ENCODE measurements at regions of chr5 and their contacts with region 1.

Region 1: GRCh38 chr5:171913987-171914273 is 92.5 kb downstream of the FBXW11 start:
- DNase-seq: no peak
- ATAC-seq: no peak; the same call in 2 of the 3 replicates
- H3K4me3 ChIP-seq: no peak overlapping the region
- H3K27ac ChIP-seq: peak overlapping the region; percentile 49
- H3K4me1 ChIP-seq: peaks cover 25% of the 10 kb centered on the region
- H3K27me3 ChIP-seq: no peaks in the 10 kb centered on the region
- CTCF ChIP-seq: no peak
- EP300 ChIP-seq: no peak
- POLR2A ChIP-seq: no peak
- RAD21 ChIP-seq: no peak

Region 2: DNA sequence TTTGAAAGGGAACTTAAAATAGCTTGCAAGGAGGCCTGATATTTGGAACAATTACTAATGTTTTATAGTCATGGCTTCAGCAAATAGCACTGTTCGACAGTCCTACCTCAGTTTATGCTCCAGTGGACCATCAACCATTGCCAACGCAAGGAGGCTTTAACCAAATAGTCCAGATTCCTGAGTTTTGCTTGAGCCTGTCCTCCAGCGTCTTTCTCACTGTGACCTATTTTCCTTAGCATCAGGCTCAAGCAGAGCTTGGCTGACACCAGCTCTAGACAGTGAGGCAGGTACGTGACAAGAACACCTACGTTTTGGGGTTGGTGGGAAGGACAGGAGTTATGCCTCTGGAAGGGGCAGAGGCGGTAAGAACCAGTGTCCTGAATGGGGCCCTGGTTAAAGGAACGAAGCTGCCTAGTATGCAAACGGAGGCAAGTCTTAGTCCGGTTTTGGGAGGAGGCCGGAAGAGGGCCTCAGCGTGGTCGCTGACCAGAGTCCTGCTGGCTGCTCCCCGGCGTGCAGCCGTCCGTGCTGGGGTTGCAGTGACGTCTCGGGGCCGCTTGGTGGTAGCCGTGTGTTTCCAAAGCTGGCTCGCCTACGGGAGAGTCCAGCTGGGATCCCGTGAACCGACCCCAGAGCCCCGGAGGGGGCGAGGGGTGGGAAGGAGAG is 495.5 kb before region 1 on chr5:
- CTCF ChIA-PET with region 1: interaction called, 10 read pairs
- POLR2A ChIA-PET with region 1: no interaction called
- RAD21 ChIA-PET with region 1: interaction called, 17 read pairs
- SMC1A ChIA-PET with region 1: interaction called, 11 read pairs
- in situ Hi-C with region 1: loop called (anchors 5 kb)
- intact Hi-C with region 1: no loop called
- DNase-seq: no peak
- ATAC-seq: peak; percentile 88
- H3K4me3 ChIP-seq: peak overlapping the region; percentile 55; the same call in 1 of the 2 replicates
- H3K27ac ChIP-seq: no peak overlapping the region
- H3K4me1 ChIP-seq: peaks cover 7% of the 10 kb centered on the region
- H3K27me3 ChIP-seq: peaks cover 4 to 5% of the 10 kb centered on the region in 2 experiments; a peak in 3 of 4 replicates
- CTCF ChIP-seq: peak; percentile 87 to 98 (median 89)
- EP300 ChIP-seq: no peak
- POLR2A ChIP-seq: no peak
- RAD21 ChIP-seq: peak; percentile 80

Region 3: GRCh38 chr5:171736976-171737891 is 176.7 kb before region 1 on chr5:
- CTCF ChIA-PET with region 1: no interaction called
- POLR2A ChIA-PET with region 1: no interaction called
- RAD21 ChIA-PET with region 1: no interaction called
- SMC1A ChIA-PET with region 1: no interaction called
- in situ Hi-C with region 1: no loop called
- intact Hi-C with region 1: no loop called
- DNase-seq: no peak
- ATAC-seq: no peak
- H3K4me3 ChIP-seq: no peak overlapping the region
- H3K27ac ChIP-seq: no peak overlapping the region
- H3K4me1 ChIP-seq: peaks cover 4% of the 10 kb centered on the region; the same call in 1 of the 2 replicates
- H3K27me3 ChIP-seq: no peaks in the 10 kb centered on the region; a peak in 2 of 4 replicates
- CTCF ChIP-seq: no peak
- EP300 ChIP-seq: no peak
- POLR2A ChIP-seq: no peak
- RAD21 ChIP-seq: no peak

Region 4: GRCh38 chr5:171840066-171840465 is 73.9 kb before region 1 on chr5:
- CTCF ChIA-PET with region 1: no interaction called
- POLR2A ChIA-PET with region 1: no interaction called
- RAD21 ChIA-PET with region 1: no interaction called
- SMC1A ChIA-PET with region 1: no interaction called
- in situ Hi-C with region 1: no loop called
- intact Hi-C with region 1: no loop called
- DNase-seq: no peak
- ATAC-seq: peak; percentile 44; the same call in 2 of the 3 replicates
- H3K4me3 ChIP-seq: no peak overlapping the region
- H3K27ac ChIP-seq: no peak overlapping the region
- H3K4me1 ChIP-seq: no peaks in the 10 kb centered on the region
- H3K27me3 ChIP-seq: no peaks in the 10 kb centered on the region
- CTCF ChIP-seq: no peak
- EP300 ChIP-seq: no peak
- POLR2A ChIP-seq: no peak
- RAD21 ChIP-seq: no peak

Region 5: DNA sequence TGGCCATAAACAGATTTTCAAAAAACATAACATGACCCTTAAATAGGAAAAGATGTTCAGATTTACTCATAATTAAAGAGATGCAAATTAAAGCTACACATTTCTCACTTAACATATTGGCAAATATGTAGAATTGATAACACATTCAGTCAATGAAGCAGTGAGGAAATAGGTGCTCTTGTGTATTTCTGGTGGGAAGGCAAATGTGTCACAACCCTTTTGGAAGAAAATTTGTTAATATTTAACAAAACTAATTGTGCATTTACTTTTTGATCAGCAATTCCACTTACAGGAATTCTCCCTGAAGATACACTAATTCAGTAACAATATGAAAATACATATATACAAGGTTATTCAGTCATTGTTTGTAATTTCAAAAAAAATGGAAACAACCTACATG is 24.4 kb after region 1 on chr5:
- CTCF ChIA-PET with region 1: interaction called, 16 read pairs
- POLR2A ChIA-PET with region 1: no interaction called
- RAD21 ChIA-PET with region 1: interaction called, 3 read pairs
- SMC1A ChIA-PET with region 1: interaction called, 12 read pairs
- in situ Hi-C with region 1: no loop called
- intact Hi-C with region 1: no loop called
- DNase-seq: no peak
- ATAC-seq: no peak
- H3K4me3 ChIP-seq: no peak overlapping the region
- H3K27ac ChIP-seq: no peak overlapping the region
- H3K4me1 ChIP-seq: peaks cover 6% of the 10 kb centered on the region; the same call in 1 of the 2 replicates
- H3K27me3 ChIP-seq: no peaks in the 10 kb centered on the region
- CTCF ChIP-seq: no peak
- EP300 ChIP-seq: no peak
- POLR2A ChIP-seq: no peak
- RAD21 ChIP-seq: no peak

Region 6: DNA sequence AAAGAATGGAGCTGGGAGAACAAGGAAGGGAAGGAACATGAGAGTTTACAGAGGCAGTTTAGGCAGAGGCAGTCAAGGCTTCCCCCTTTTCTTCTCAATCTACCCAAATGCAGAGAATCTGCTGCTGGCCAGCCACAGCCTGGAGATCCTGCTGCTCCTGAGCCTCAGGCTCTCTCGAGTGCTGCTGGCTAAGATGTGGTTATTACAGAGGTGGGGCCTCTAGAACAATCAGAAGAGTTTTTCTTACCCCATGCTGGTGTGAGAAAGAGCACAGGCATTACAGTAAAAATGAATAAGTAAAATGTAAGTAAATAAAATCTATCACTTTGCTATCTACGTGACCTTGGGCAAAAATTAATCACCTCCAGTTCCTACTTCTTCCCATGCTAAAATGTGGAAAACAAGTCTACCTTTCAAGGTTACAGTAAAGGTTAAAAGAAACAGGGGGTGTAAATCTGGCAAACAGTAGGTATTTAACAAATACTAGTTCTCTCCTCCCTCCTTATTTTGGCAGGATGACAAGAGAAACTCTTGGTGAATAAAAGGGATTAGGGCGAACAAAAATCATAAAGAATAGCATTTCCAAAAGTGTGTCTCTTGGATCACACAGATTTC is 61.4 kb after region 1 on chr5:
- CTCF ChIA-PET with region 1: interaction called, 10 read pairs
- POLR2A ChIA-PET with region 1: no interaction called
- RAD21 ChIA-PET with region 1: interaction called, 7 read pairs
- SMC1A ChIA-PET with region 1: interaction called, 5 read pairs
- in situ Hi-C with region 1: no loop called
- intact Hi-C with region 1: no loop called
- DNase-seq: no peak
- ATAC-seq: no peak
- H3K4me3 ChIP-seq: no peak overlapping the region; the same call in 1 of the 2 replicates
- H3K27ac ChIP-seq: no peak overlapping the region; the same call in 1 of the 2 replicates
- H3K4me1 ChIP-seq: peaks cover 18% of the 10 kb centered on the region
- H3K27me3 ChIP-seq: no peaks in the 10 kb centered on the region
- CTCF ChIP-seq: no peak
- EP300 ChIP-seq: no peak
- POLR2A ChIP-seq: no peak
- RAD21 ChIP-seq: no peak

Region 7: GRCh38 chr5:172006321-172007174 is 92.6 kb after region 1 on chr5 and contains the start of gene FBXW11:
- CTCF ChIA-PET with region 1: interaction called, 179 read pairs
- POLR2A ChIA-PET with region 1: interaction called, 30 read pairs
- RAD21 ChIA-PET with region 1: interaction called, 97 read pairs
- SMC1A ChIA-PET with region 1: interaction called, 167 read pairs
- in situ Hi-C with region 1: no loop called
- intact Hi-C with region 1: loop called (anchors 1 kb)
- DNase-seq: peak; percentile 87
- ATAC-seq: peak; percentile 89
- H3K4me3 ChIP-seq: peak within 1 kb of the TSS; percentile 100
- H3K27ac ChIP-seq: peak within 1 kb of the TSS; percentile 98
- H3K4me1 ChIP-seq: peaks cover 28% of the 10 kb centered on the region
- H3K27me3 ChIP-seq: no peaks in the 10 kb centered on the region
- CTCF ChIP-seq: no peak
- EP300 ChIP-seq: no peak
- POLR2A ChIP-seq: peak; percentile 97
- RAD21 ChIP-seq: no peak
- polyA plus RNA-seq, gene FBXW11: 4.3 to 7.7 TPM

Region 8: GRCh38 chr5:172044631-172045314 is 130.8 kb after region 1 on chr5:
- CTCF ChIA-PET with region 1: interaction called, 123 read pairs
- POLR2A ChIA-PET with region 1: interaction called, 3 read pairs
- RAD21 ChIA-PET with region 1: interaction called, 82 read pairs
- SMC1A ChIA-PET with region 1: interaction called, 92 read pairs
- in situ Hi-C with region 1: loop called (anchors 5 kb)
- intact Hi-C with region 1: loop called (anchors 1 kb)
- DNase-seq: no peak
- ATAC-seq: no peak
- H3K4me3 ChIP-seq: no peak overlapping the region
- H3K27ac ChIP-seq: no peak overlapping the region
- H3K4me1 ChIP-seq: no peaks in the 10 kb centered on the region
- H3K27me3 ChIP-seq: no peaks in the 10 kb centered on the region
- CTCF ChIP-seq: 0 out of 6 replicates have a peak, but pooled peaks of 1 of the 3 experiments have one; percentile 1
- EP300 ChIP-seq: no peak
- POLR2A ChIP-seq: no peak
- RAD21 ChIP-seq: peak; percentile 17; the same call in 1 of the 2 replicates

Region 9: GRCh38 chr5:172188033-172188892 is 274.3 kb after region 1 on chr5 and contains the start of gene STK10:
- CTCF ChIA-PET with region 1: interaction called, 46 read pairs
- POLR2A ChIA-PET with region 1: no interaction called
- RAD21 ChIA-PET with region 1: interaction called, 31 read pairs
- SMC1A ChIA-PET with region 1: interaction called, 9 read pairs
- in situ Hi-C with region 1: no loop called
- intact Hi-C with region 1: loop called (anchors 5 kb)
- DNase-seq: no peak
- ATAC-seq: peak; percentile 84
- H3K4me3 ChIP-seq: peak within 1 kb of the TSS; percentile 89
- H3K27ac ChIP-seq: peak within 1 kb of the TSS; percentile 68
- H3K4me1 ChIP-seq: peaks cover 20% of the 10 kb centered on the region
- H3K27me3 ChIP-seq: no peaks in the 10 kb centered on the region
- CTCF ChIP-seq: peak; percentile 80 to 99 (median 89); a peak in 5 of 6 replicates
- EP300 ChIP-seq: 0 out of 4 replicates have a peak, but pooled peaks of 1 of the 2 experiments have one; percentile 3
- POLR2A ChIP-seq: peak; percentile 65
- RAD21 ChIP-seq: peak; percentile 85
- polyA plus RNA-seq, gene STK10: 14.2 to 20.4 TPM

Measured in GM12878 (cell line).